ENCODE measurements at regions of chr22 and their contacts with region 1.

Region 1: GRCh38 chr22:43424666-43425630 is 13.1 kb downstream of the MPPED1 start:
- DNase-seq: no peak
- H3K4me3 ChIP-seq: peak overlapping the region in 1 of 3 donors; percentile 33
- H3K27ac ChIP-seq: no peak overlapping the region
- H3K4me1 ChIP-seq: no peaks in the 10 kb centered on the region
- H3K27me3 ChIP-seq: peaks cover 0 to 59% of the 10 kb centered on the region in 2 donors
- CTCF ChIP-seq: no peak
- POLR2A ChIP-seq: no peak

Region 2: GRCh38 chr22:43399338-43399979 is 25.5 kb before region 1 on chr22:
- intact Hi-C with region 1: no loop called
- DNase-seq: no peak
- H3K4me3 ChIP-seq: no peak overlapping the region
- H3K27ac ChIP-seq: no peak overlapping the region
- H3K4me1 ChIP-seq: no peaks in the 10 kb centered on the region
- H3K27me3 ChIP-seq: peaks cover 0 to 25% of the 10 kb centered on the region in 2 donors
- CTCF ChIP-seq: no peak
- POLR2A ChIP-seq: no peak

Region 3: GRCh38 chr22:43826142-43827002 is 401.4 kb after region 1 on chr22:
- intact Hi-C with region 1: loop called (anchors 5 kb)
- DNase-seq: no peak
- H3K4me3 ChIP-seq: no peak overlapping the region
- H3K27ac ChIP-seq: no peak overlapping the region
- H3K4me1 ChIP-seq: no peaks in the 10 kb centered on the region
- H3K27me3 ChIP-seq: peaks cover 0 to 7% of the 10 kb centered on the region in 2 donors
- CTCF ChIP-seq: no peak
- POLR2A ChIP-seq: no peak

Region 4: DNA sequence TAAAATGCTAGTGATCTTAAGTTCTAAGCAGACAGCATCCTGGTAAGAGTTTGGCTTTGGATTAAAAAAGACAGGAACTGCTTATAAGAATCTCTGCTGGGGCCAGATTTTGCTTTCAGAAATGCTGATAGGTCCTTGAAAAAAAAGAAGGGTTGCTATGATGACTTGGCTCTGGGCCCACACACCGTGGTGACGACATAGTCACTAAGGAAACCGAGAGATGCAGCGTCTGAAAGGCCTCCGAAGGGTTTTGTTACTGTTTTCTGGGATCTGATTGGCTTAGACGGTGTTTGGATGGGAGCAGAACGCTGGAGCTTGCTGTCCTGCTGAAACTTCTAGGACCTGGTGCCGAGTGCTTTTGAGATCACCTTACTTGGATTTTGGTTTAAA is 1893.2 kb after region 1 on chr22:
- intact Hi-C with region 1: loop called (anchors 5 kb)
- DNase-seq: peak; percentile 69 to 71
- H3K4me3 ChIP-seq: peak overlapping the region in 2 of 3 donors; percentile 0 to 39
- H3K27ac ChIP-seq: peak overlapping the region; percentile 76 to 92
- H3K4me1 ChIP-seq: peaks cover 0 to 7% of the 10 kb centered on the region in 2 donors
- H3K27me3 ChIP-seq: no peaks in the 10 kb centered on the region
- CTCF ChIP-seq: no peak
- POLR2A ChIP-seq: no peak

Measured in breast epithelium (tissue), 4 donors.